Sigmoid colon (tissue), 7 donors: ENCODE measurements at regions of chr3 and their contacts with region 1.

Region 1: DNA sequence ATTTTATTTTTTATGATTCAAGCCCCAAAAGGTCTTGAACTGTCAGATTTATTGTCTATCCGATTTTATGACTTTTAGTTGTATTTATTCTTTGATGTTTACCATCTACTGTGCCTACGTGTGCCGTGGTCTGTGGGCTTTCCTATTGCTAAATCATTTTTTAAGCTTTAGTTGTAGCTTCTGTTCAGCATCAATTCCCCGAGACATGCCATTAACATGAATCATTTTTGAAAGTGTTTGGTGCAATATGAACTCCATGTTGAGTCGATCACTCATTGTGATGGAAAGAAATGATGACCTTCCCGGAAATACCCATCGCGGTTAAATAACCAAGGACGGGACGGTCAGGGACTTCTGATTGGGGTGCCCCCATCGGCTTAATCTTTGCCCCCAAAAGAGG is 268.8 kb upstream of the THRB start:
- DNase-seq: no peak
- H3K4me3 ChIP-seq: no peak overlapping the region
- H3K27ac ChIP-seq: no peak overlapping the region
- H3K4me1 ChIP-seq: no peaks in the 10 kb centered on the region
- H3K27me3 ChIP-seq: no peaks in the 10 kb centered on the region
- CTCF ChIP-seq: no peak
- EP300 ChIP-seq: no peak
- POLR2A ChIP-seq: no peak

Region 2: DNA sequence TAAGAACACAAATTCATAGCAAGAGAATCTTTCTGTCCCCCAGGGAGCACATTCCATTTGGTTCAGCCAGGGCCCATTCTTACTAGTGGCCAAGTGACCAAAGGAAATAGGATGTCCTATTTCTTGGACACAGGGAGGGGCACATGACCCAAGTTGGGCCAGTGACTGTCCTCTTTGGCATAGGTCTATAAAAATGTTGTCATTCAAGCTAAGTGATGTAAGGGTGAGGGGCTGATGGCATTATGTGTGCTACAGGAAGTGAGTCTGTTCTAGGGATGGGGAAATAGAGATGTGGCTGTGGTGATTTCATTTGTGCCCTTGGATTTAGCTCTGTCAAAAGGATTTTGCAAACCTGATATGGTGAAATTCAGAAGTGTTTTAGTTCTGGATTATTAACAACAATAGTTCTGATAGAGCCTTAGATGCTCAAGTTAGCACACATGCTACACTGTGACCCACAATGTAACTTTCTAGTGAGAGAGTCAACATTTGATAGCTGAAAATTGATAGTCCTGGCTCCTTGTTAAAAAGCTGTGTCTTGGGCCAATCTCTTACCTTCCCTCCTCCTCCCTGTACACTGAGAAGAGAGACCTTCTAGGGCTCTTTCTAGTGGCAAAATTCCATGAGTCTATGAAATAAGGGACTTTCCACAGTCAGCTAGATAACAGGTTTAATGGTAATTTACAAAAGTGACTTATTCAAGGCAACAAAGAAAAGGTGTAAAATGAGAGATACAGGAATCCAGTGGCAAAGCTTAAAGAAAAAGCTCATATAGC is 386.0 kb before region 1 on chr3:
- intact Hi-C with region 1: no loop called
- DNase-seq: peak; percentile 64
- H3K4me3 ChIP-seq: no peak overlapping the region
- H3K27ac ChIP-seq: peak overlapping the region; percentile 14 to 61 (median 37)
- H3K4me1 ChIP-seq: peaks cover 0 to 75% (median 63%) of the 10 kb centered on the region in 4 donors
- H3K27me3 ChIP-seq: no peaks in the 10 kb centered on the region
- CTCF ChIP-seq: no peak
- EP300 ChIP-seq: no peak
- POLR2A ChIP-seq: no peak

Region 3: GRCh38 chr3:24726423-24726822 is 37.0 kb before region 1 on chr3:
- intact Hi-C with region 1: no loop called
- DNase-seq: no peak
- H3K4me3 ChIP-seq: no peak overlapping the region
- H3K27ac ChIP-seq: no peak overlapping the region
- H3K4me1 ChIP-seq: no peaks in the 10 kb centered on the region
- H3K27me3 ChIP-seq: no peaks in the 10 kb centered on the region
- CTCF ChIP-seq: no peak
- EP300 ChIP-seq: no peak
- POLR2A ChIP-seq: no peak

Region 4: GRCh38 chr3:25094932-25095685 is 331.7 kb after region 1 on chr3:
- intact Hi-C with region 1: loop called (anchors 10 kb)
- DNase-seq: no peak
- H3K4me3 ChIP-seq: no peak overlapping the region
- H3K27ac ChIP-seq: no peak overlapping the region
- H3K4me1 ChIP-seq: no peaks in the 10 kb centered on the region
- H3K27me3 ChIP-seq: no peaks in the 10 kb centered on the region
- CTCF ChIP-seq: no peak
- EP300 ChIP-seq: no peak
- POLR2A ChIP-seq: no peak